HAP-1 (cell line): ENCODE measurements at regions of chrX and their contacts with region 1.

Region 1: GRCh38 chrX:56729152-56729850 is at the start of gene NBDY:
- DNase-seq: peak; percentile 75 to 89
- H3K4me3 ChIP-seq: peak within 1 kb of the TSS; percentile 64
- H3K4me1 ChIP-seq: peaks cover 3% of the 10 kb centered on the region; the same call in 1 of the 2 replicates
- H3K27me3 ChIP-seq: no peaks in the 10 kb centered on the region

Region 2: DNA sequence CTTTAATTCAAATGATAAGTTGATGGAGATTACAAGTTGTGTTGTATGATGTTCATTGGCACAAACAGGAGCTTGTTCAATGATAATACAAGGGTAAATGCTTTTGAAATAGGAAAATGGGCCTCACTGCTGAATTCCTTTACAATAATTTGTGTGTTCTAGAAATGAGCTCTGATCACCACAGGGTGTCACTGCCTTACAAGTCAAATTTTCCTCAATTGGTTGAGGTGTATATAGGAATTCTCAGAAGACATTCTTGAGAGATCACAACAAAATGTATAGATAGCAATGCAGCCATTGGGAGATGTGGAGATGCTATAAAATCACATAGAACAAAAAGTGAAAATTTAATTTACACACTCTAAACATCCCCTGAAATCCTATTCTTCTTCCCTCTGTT is 447.5 kb before region 1 on chrX:
- in situ Hi-C with region 1: loop called (anchors 25 kb)
- DNase-seq: peak; percentile 7 to 8
- H3K4me3 ChIP-seq: no peak overlapping the region
- H3K4me1 ChIP-seq: no peaks in the 10 kb centered on the region
- H3K27me3 ChIP-seq: no peaks in the 10 kb centered on the region

Region 3: DNA sequence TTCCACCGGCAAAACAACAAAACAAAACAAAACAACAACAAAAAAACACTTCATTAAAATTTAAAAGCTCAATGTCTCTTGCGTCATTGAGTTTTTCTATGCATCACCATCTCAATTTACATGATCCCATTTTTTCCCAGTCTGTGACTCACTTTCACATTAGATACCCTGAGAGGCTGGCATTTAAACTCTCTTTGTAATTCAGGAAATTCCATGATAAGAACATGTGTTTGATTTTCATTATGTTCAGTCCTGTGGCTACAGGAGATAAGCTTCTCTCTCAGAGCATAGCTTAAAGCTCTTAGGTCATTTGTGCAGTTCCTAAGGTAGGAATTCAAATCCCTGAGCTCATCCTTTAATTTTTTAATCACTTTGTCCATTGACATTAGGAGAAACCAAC is 104.3 kb after region 1 on chrX:
- in situ Hi-C with region 1: no loop called
- DNase-seq: no peak
- H3K4me3 ChIP-seq: no peak overlapping the region
- H3K4me1 ChIP-seq: no peaks in the 10 kb centered on the region
- H3K27me3 ChIP-seq: no peaks in the 10 kb centered on the region

Region 4: GRCh38 chrX:56947695-56948094 is 218.4 kb after region 1 on chrX:
- in situ Hi-C with region 1: no loop called
- DNase-seq: no peak
- H3K4me3 ChIP-seq: no peak overlapping the region
- H3K4me1 ChIP-seq: no peaks in the 10 kb centered on the region
- H3K27me3 ChIP-seq: no peaks in the 10 kb centered on the region

Region 5: DNA sequence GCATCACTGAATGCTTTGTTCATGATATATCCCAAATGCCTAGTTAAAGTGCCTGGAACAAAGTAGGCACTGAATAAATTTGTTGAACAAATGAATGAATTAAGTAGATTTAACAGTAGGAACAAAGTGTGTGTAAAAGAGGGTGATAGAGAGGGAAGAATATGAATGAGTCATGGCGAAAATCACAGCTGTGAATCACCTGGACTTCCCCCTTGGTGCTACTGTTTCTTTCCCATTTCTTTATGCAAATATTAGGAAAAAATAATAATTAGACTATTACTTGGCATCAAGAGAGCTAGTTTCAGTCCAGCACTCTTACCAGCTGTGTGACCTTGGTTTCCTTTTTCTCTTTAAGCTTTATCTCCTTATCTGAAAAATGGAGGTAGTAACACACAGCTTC is 256.8 kb after region 1 on chrX:
- in situ Hi-C with region 1: no loop called
- DNase-seq: no peak
- H3K4me3 ChIP-seq: no peak overlapping the region
- H3K4me1 ChIP-seq: no peaks in the 10 kb centered on the region
- H3K27me3 ChIP-seq: no peaks in the 10 kb centered on the region